ENCODE measurements at regions of chr19 and their contacts with region 1.

Region 1: GRCh38 chr19:44770550-44771257 is 7.0 kb upstream of the CBLC start:
- DNase-seq: peak; percentile 99
- H3K4me3 Mint-ChIP-seq: peak overlapping the region; percentile 31
- H3K27ac Mint-ChIP-seq: peak overlapping the region; percentile 24
- H3K4me1 Mint-ChIP-seq: peaks cover 26% of the 10 kb centered on the region
- H3K27me3 Mint-ChIP-seq: no peaks in the 10 kb centered on the region

Region 2: GRCh38 chr19:44570984-44571684 is 199.6 kb before region 1 on chr19:
- CTCF ChIA-PET with region 1: interaction called, 5 read pairs
- POLR2A ChIA-PET with region 1: no interaction called
- intact Hi-C with region 1: loop called (anchors 5 kb)
- DNase-seq: peak; percentile 57
- H3K4me3 Mint-ChIP-seq: no peak overlapping the region
- H3K27ac Mint-ChIP-seq: no peak overlapping the region
- H3K4me1 Mint-ChIP-seq: no peaks in the 10 kb centered on the region
- H3K27me3 Mint-ChIP-seq: peaks cover 13% of the 10 kb centered on the region

Region 3: DNA sequence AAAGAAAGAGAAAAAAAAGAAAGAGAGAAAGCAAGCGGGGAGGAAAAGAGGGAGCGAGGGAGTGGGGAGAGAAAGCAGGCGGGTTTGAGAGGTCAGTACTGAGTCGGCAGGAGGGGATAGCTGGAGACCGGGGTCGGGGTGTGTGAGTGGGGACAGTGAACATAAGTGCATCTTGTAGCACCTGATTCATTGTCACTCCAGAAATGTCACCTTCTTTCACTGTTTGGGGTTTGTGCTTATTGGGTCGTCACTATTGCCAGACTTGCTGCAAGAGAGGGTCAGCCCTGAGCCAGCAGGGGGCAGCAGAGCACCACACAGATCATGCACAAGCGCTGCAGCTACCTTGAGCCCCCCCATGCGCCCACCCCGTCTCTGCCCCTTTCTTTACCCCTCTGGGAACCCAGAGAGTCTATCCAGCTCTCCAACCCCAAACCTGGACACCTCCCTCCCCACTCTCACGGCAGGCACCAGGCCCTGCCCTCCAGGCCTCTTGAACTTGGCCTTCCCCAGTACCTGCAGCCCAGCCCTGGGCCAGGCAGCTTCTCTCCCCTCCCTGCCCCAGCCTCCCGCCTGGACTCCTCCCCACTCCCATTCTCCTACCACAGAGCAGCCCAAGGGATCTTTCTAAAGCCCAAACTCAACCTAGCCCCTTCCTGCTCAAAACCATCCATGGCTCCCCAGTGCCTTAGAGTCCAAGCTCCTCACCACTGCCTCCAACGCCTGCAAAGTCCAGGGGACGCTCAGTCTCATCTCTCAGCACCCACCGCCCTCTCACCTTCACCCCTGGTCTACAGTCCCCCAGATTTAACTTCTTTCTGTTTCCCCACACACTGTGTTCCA is 81.4 kb before region 1 on chr19:
- CTCF ChIA-PET with region 1: interaction called, 107 read pairs
- POLR2A ChIA-PET with region 1: interaction called, 5 read pairs
- intact Hi-C with region 1: loop called (anchors 1 kb)
- DNase-seq: peak; percentile 81
- H3K4me3 Mint-ChIP-seq: no peak overlapping the region
- H3K27ac Mint-ChIP-seq: no peak overlapping the region
- H3K4me1 Mint-ChIP-seq: peaks cover 32% of the 10 kb centered on the region
- H3K27me3 Mint-ChIP-seq: peaks cover 10% of the 10 kb centered on the region

Region 4: DNA sequence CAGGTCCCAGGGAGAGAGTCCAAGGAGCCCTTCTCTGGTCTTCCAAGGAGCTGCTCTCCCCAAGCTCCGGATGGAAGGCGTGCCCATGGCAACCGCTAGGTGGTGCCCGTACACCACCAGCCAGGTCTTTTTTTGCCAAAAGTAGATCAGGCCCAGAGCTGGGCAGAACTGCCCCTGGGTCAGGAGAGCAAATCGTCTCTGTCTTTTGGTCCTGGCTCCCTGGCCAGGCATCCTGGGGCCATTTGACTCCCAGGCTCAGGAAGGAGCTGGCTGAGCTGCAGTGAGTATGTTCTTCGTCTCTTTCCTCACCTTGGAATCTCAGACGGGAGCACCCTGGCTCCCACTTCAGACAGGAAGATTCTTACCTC is 46.8 kb before region 1 on chr19:
- CTCF ChIA-PET with region 1: interaction called, 434 read pairs
- POLR2A ChIA-PET with region 1: interaction called, 20 read pairs
- intact Hi-C with region 1: loop called (anchors 1 kb)
- DNase-seq: peak; percentile 88
- H3K4me3 Mint-ChIP-seq: no peak overlapping the region
- H3K27ac Mint-ChIP-seq: peak overlapping the region; percentile 10
- H3K4me1 Mint-ChIP-seq: peaks cover 35% of the 10 kb centered on the region
- H3K27me3 Mint-ChIP-seq: peaks cover 2% of the 10 kb centered on the region

Region 5: DNA sequence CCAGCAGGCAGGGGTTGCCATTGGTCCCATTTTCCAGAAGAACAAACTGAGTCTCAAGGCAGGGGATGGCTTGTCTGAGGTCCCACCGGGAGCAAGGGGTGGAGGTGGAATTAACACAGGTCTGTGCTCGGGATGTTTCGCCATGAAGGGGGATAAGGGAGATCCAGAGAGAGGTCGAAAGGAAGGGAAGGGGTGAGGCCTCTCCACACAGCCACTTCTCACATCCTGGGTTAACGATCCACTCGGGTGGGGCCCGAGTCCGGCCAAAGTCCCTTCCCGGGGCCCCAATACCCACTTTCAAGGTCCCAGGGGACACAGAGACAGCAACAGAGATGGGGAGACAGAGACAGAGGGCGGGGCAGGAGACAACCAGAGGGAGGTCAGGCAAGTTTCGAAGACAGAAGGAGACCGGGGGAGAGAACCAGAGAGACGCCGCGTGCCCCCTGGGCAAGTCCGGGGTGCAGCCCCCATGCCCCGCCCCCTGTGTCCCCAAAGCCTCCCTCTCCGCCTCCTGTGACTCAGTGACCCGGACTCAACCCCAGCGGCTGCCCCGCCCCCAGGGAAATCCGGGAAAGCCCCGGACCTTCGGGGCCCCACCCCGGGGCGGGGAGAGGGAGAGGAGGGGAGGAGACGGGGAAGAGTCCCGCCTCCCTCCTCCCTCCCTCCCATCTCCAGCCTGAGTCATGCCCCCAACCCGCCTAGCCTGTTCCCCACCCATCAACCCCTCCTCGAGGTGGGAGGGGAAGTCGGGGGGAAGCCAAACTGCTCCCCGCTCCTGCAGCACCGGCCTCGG is 23.6 kb before region 1 on chr19:
- CTCF ChIA-PET with region 1: interaction called, 13 read pairs
- POLR2A ChIA-PET with region 1: no interaction called
- intact Hi-C with region 1: loop called (anchors 1 kb)
- DNase-seq: peak; percentile 96
- H3K4me3 Mint-ChIP-seq: peak overlapping the region; percentile 84
- H3K27ac Mint-ChIP-seq: peak overlapping the region; percentile 97
- H3K4me1 Mint-ChIP-seq: peaks cover 46% of the 10 kb centered on the region
- H3K27me3 Mint-ChIP-seq: no peaks in the 10 kb centered on the region

Region 6: GRCh38 chr19:44782729-44783128 is 12.0 kb after region 1 on chr19:
- CTCF ChIA-PET with region 1: interaction called, 28 read pairs
- POLR2A ChIA-PET with region 1: no interaction called
- intact Hi-C with region 1: no loop called
- DNase-seq: no peak
- H3K4me3 Mint-ChIP-seq: no peak overlapping the region
- H3K27ac Mint-ChIP-seq: no peak overlapping the region
- H3K4me1 Mint-ChIP-seq: peaks cover 4% of the 10 kb centered on the region
- H3K27me3 Mint-ChIP-seq: peaks cover 3% of the 10 kb centered on the region

Region 7: DNA sequence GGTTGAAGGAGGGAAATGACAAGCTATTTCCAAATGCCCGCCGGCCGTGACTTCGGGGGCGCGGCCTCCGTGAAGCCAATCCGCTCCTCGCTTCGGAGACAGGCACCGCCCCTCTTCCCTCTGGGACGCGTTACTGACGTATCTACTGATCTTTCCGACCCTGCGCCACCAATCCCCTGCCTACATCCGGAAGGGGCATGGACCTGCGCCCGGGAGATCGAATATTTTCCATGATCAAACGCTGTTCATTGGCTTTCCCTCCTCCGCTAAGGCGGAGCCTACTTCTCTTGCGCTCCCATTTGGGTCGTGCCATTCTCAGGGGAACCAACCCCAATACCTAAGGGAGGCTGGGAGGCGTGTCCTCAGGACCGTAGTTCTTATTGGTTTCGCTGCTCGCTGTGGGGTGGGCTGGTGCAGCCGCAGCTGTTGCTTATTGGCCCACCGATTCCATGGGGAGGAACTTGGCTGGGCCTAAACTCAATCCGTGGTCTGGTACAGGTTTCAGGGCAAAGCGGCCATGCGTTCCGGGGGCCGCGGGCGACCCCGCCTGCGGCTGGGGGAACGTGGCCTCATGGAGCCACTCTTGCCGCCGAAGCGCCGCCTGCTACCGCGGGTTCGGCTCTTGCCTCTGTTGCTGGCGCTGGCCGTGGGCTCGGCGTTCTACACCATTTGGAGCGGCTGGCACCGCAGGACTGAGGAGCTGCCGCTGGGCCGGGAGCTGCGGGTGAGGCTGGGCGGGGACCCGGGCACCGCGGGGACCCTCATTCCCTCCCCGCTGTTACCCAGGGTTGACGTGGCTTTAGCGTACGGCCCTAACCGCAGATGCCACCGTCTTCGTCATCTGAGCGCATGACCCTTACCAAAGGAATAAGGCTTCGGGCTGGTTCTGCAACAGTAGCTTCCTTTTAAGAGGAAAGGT is 921.7 kb after region 1 on chr19 and contains the start of gene QPCTL:
- CTCF ChIA-PET with region 1: no interaction called
- POLR2A ChIA-PET with region 1: no interaction called
- intact Hi-C with region 1: no loop called
- DNase-seq: peak; percentile 99
- H3K4me3 Mint-ChIP-seq: peak within 1 kb of the TSS; percentile 97
- H3K27ac Mint-ChIP-seq: peak within 1 kb of the TSS; percentile 94
- H3K4me1 Mint-ChIP-seq: peaks cover 21% of the 10 kb centered on the region
- H3K27me3 Mint-ChIP-seq: no peaks in the 10 kb centered on the region
- total RNA-seq, gene QPCTL: 13.8 to 16.8 TPM